Tibial artery (tissue), 4 donors: ENCODE measurements at regions of chr2 and their contacts with region 1.

Region 1: DNA sequence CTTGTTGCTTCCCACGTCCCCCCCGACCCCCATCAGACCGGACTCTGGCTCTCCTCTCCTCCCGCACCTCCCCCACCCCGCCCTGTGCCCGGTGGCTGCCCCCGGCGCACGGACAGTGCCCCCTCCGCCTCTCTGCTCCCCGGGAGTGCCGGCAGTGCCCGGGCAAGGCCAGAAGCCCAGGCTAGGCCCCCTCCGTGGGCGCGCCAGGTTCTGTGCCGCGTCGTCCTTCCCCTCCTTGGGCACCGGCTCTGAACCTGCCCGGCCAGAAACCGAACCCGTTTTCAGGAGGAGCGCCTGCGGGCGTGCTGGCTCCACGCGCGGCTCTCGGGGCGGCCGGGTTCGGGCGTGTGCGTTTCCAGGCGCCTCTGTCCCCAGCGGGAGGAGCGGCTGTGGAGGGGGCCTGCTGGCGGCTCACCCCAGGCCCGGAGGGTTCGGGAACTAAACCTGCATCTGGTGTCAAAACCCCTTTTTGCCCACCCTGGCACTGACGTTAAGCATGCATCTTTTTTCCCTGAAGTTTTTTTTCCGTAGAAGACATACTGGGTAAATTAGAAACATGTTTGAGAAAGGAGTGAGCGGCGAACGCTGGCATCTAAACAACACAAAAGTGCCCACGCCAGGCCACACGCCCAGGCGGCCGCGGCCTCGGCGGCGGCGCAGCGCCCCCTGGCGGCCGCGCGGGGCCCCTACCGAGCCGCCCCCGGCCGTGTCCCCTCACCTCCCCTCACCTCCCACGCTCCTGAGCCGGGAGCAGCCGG is 123.9 kb upstream of the SLC1A4 start:
- DNase-seq: peak; percentile 65 to 80
- H3K4me3 ChIP-seq: peak overlapping the region; percentile 62 to 64
- H3K27ac ChIP-seq: peak overlapping the region; percentile 65 to 85
- H3K4me1 ChIP-seq: peaks cover 0 to 14% (median 6%) of the 10 kb centered on the region in 4 donors
- H3K27me3 ChIP-seq: no peaks in the 10 kb centered on the region
- CTCF ChIP-seq: peak; percentile 60 to 97

Region 2: DNA sequence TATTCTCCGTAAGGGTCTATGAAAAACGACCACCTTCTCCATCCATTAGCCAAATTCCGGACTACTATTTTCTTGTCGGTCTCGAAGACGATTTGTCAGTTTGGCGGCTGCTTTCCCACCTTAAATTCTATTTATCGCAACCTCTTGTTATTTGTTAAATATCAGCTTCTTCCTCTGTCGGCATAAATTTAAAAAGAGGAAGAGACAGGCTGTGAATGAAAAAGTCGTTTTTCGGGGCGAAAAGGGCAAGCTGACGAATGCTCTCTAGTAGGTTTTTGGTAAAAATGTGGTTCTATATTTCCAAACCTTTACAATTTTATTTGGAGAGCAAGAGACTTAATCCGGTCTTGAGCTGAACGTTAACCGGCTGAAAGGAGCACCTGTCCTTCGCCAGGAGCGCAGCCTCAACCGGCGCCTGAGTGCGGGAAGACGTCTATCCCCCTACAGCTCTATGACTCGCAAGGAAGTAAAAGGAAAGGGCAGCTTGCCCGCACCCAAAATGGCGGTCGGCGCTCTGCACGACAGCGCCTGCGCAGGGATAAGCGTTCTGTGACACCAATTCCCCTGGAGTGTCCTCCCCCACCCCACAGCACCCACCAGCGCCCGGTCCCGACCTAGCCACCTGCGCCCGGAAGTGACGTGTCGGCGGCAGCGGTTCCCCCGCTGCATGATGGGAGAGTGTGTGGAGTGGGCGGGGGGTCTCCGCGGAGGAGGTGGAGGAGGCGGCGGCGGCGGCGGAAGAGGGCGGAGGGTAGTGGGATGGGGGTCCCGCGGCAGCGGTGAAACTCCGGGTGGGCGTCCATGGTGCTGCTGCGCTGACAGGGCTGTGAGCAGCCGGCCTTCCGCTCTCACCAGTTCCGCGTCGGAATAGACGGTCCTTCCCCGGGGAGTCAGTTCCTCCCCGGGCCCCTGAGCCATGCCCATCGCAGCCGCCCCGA is 341.3 kb before region 1 on chr2 and contains the start of gene AFTPH:
- intact Hi-C with region 1: loop called (anchors 10 kb)
- DNase-seq: peak; percentile 98 to 99
- H3K4me3 ChIP-seq: peak within 1 kb of the TSS; percentile 90 to 98
- H3K27ac ChIP-seq: peak within 1 kb of the TSS; percentile 96 to 97
- H3K4me1 ChIP-seq: peaks cover 0 to 29% (median 20%) of the 10 kb centered on the region in 4 donors
- H3K27me3 ChIP-seq: no peaks in the 10 kb centered on the region
- CTCF ChIP-seq: no peak

Region 3: DNA sequence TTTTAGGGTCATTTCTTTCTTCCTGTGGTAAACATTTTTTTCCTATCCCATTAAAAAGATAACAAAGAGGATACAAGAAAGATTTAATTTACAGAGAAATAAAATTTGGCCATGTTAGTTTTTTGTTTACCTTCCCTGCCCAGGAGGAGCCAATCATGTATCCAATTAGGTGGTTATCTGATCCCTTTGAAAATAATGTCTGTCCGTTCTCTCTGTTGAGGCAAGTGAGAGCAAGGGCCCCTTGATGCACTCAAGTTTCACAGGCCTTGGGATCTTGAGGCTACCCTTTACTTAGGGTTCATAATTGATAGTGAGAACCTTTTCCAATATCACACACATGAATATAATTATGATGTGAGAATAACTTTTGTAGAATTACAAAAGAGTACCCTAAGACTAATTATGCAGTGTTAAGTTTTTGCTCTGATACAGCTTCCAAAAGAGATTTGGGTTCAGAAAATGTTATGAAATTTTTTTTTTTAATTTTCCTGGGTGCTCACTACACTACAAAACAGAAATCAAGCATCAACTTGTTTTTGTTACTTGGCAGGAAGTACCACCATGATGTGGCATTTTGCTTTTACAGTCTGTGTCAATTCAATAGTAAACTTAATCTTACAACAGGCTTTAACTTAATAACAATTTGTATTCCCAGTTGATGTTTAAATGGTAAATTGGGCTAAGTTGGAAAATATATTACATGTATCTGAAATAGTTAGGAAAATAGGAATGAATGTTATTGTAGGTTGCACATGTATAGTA is 299.1 kb before region 1 on chr2:
- intact Hi-C with region 1: no loop called
- DNase-seq: no peak
- H3K4me3 ChIP-seq: no peak overlapping the region
- H3K27ac ChIP-seq: no peak overlapping the region
- H3K4me1 ChIP-seq: peaks cover 0 to 5% (median 0%) of the 10 kb centered on the region in 4 donors
- H3K27me3 ChIP-seq: no peaks in the 10 kb centered on the region
- CTCF ChIP-seq: no peak

Region 4: GRCh38 chr2:64586883-64587481 is 278.3 kb before region 1 on chr2:
- intact Hi-C with region 1: loop called (anchors 5 kb)
- DNase-seq: no peak
- H3K4me3 ChIP-seq: no peak overlapping the region
- H3K27ac ChIP-seq: no peak overlapping the region
- H3K4me1 ChIP-seq: peaks cover 0 to 4% (median 0%) of the 10 kb centered on the region in 4 donors
- H3K27me3 ChIP-seq: no peaks in the 10 kb centered on the region
- CTCF ChIP-seq: peak; percentile 54 to 75

Region 5: GRCh38 chr2:64644177-64645004 is 220.9 kb before region 1 on chr2:
- intact Hi-C with region 1: loop called (anchors 5 kb)
- DNase-seq: peak; percentile 84 to 85
- H3K4me3 ChIP-seq: peak overlapping the region; percentile 51 to 56
- H3K27ac ChIP-seq: peak overlapping the region; percentile 73 to 76
- H3K4me1 ChIP-seq: peaks cover 0 to 54% (median 32%) of the 10 kb centered on the region in 4 donors
- H3K27me3 ChIP-seq: no peaks in the 10 kb centered on the region
- CTCF ChIP-seq: no peak

Region 6: GRCh38 chr2:64963719-64964118 is 98.5 kb after region 1 on chr2:
- intact Hi-C with region 1: no loop called
- DNase-seq: no peak
- H3K4me3 ChIP-seq: no peak overlapping the region
- H3K27ac ChIP-seq: no peak overlapping the region
- H3K4me1 ChIP-seq: no peaks in the 10 kb centered on the region
- H3K27me3 ChIP-seq: no peaks in the 10 kb centered on the region
- CTCF ChIP-seq: no peak